ENCODE measurements at regions of chr11 and their contacts with region 1.

Region 1: GRCh38 chr11:2196970-2197770 is 25.6 kb upstream of the TH start:
- DNase-seq: peak; percentile 49 to 84
- H3K4me3 ChIP-seq: no peak overlapping the region
- H3K4me1 ChIP-seq: no peaks in the 10 kb centered on the region
- H3K27me3 ChIP-seq: no peaks in the 10 kb centered on the region

Region 2: DNA sequence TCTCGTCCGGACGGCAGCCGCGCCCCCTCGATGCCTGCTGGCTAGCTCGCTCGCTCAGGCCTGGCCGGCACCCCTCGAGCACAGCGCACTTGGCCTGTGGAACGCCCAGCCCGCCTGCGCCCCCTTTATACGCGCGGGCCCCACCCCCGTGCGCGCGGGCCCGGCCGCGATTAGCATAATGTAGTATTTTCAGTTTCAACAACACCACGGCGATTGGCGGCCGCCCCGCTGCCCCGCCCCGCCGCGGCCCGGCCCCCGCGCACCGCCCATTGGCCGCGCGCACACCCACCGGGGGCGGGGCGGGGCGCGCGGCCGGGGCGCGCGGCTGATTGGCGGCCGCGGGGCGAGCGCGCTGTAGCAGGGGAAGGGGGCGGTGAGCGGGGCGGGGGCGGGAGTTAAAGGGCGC is 688.5 kb after region 1 on chr11 and contains the start of gene CDKN1C:
- in situ Hi-C with region 1: loop called (anchors 25 kb)
- DNase-seq: peak; percentile 73 to 91
- H3K4me3 ChIP-seq: peak within 1 kb of the TSS; percentile 48
- H3K4me1 ChIP-seq: peaks cover 7% of the 10 kb centered on the region
- H3K27me3 ChIP-seq: no peaks in the 10 kb centered on the region